Naive thymus-derived CD4-positive, alpha-beta T cell (primary cell): ENCODE measurements at regions of chr19 and their contacts with region 1.

Region 1: DNA sequence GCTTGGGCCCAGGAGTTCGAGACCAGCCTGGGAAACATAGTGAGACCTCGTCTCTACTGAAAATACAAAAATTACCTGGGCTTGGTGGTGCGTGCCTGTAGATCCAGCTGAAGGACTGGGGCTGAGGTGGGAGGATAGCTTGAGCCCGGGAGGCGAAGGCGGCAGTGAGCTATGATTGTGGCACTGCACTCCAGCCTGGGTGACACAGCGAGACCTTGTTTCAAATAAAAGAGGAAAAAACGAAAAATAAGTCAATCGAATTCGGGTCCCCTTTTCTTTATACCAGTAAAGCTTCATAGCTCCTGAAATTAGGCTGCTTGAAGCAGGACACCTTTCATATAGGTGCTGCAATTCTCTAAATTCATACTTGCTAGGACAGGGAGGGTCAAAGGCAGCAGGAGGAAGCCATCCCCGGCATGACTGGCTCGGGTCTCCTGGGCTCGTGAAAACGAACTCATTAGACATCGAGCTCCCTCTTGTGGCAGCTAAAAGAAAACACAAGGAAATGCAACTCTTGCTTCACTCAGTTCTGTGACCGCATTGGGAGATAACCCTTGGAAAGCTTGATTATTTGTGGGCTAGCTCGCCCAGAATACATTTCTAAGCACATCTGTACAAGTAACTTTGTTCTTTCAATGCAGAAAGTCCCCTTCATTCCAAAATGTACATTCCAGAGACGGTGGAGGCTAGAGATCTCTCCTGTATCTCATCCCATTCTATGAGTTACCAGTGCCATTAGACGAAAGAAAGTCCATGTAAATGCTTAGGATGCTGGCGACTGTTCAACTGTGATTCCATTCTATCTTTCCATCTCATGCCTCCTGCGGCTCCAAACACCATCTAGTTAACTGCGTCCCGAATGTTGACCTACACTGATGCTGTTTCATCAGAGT is 16.8 kb downstream of the FPR2 start:
- DNase-seq: peak in 8 of 9 donors; percentile 4 to 43 (median 35)
- ATAC-seq: peak; percentile 76
- H3K4me3 ChIP-seq: no peak overlapping the region
- H3K4me3 Mint-ChIP-seq: no peak overlapping the region
- H3K27ac ChIP-seq: no peak overlapping the region
- H3K27ac Mint-ChIP-seq: no peak overlapping the region
- H3K4me1 ChIP-seq: no peaks in the 10 kb centered on the region
- H3K4me1 Mint-ChIP-seq: peaks cover 0 to 7% (median 0%) of the 10 kb centered on the region in 7 donors
- H3K27me3 ChIP-seq: peaks cover 0 to 8% of the 10 kb centered on the region in 2 donors
- H3K27me3 Mint-ChIP-seq: peaks cover 13 to 71% (median 68%) of the 10 kb centered on the region in 5 donors

Region 2: DNA sequence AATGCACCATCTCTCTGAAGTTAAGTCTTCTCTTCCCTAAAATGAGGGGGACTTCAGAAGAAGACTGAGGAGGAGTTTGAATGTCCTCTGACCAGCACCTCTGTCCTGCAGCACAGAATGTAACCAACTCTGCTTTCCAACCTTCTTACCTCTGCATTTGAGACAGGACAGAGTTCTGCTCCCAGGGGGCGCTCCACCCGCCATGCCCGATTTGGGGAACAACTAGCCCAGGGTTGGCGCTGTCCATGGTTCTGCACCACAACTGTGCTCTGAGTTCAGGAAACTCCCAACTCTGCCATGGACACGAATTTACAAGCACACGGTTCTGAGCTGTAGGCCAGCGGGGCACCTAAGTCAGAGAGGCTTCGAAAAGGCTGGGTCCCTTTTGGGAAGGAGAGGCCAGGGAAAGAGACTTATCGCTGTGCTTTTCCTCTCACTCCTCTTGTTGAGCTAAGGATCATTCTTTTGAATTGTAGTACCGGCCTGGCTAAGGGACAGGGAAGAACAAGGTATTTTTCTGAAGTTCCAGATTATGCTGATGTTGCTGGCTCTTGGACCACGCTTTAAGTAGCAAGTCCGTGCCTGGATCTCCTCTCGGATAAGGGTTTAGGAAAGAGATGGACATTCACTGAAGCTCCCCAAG is 169.8 kb before region 1 on chr19:
- CTCF ChIA-PET with region 1: no interaction called
- POLR2A ChIA-PET with region 1: no interaction called
- intact Hi-C with region 1: loop called in 1 of 2 experiments (anchors 2 kb)
- DNase-seq: peak in 8 of 9 donors; percentile 19 to 75 (median 36)
- ATAC-seq: peak; percentile 88
- H3K4me3 ChIP-seq: no peak overlapping the region
- H3K4me3 Mint-ChIP-seq: no peak overlapping the region
- H3K27ac ChIP-seq: no peak overlapping the region
- H3K27ac Mint-ChIP-seq: no peak overlapping the region
- H3K4me1 ChIP-seq: no peaks in the 10 kb centered on the region
- H3K4me1 Mint-ChIP-seq: peaks cover 0 to 5% (median 0%) of the 10 kb centered on the region in 7 donors
- H3K27me3 ChIP-seq: no peaks in the 10 kb centered on the region
- H3K27me3 Mint-ChIP-seq: peaks cover 6 to 60% (median 52%) of the 10 kb centered on the region in 5 donors

Region 3: DNA sequence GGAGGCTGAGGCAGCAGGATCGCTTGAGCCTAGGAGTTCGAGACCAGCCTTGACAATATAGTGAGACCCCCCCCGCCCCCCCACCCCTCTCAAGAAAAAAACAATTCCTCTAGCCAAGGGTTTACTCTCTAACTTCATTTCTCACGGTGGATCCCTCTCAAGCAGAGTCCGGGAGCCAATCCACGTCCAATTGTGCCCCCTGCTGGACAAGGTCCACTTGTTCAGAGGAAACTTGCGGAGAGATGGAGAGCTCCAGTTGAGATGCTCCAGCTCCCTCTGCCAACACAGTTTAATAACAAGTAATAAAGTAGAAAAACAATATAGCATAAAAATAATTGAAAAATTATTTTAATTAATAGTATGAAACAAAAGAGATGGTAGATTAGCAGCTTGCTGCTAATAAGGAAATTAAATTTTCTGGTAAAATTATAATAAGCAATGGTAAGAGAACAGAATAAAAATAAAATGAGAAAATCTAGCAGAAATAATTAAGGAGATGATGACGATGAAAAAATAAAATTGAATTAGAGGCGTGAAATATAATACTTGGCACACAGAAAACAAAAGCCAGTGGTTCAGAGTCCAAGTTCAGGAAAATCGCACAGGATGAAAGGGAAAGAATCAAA is 116.7 kb before region 1 on chr19:
- CTCF ChIA-PET with region 1: interaction called, 3 read pairs
- POLR2A ChIA-PET with region 1: no interaction called
- intact Hi-C with region 1: loop called in 1 of 2 experiments (anchors 2 kb)
- DNase-seq: peak in 8 of 9 donors; percentile 7 to 52 (median 29)
- ATAC-seq: peak; percentile 60
- H3K4me3 ChIP-seq: no peak overlapping the region
- H3K4me3 Mint-ChIP-seq: no peak overlapping the region
- H3K27ac ChIP-seq: no peak overlapping the region
- H3K27ac Mint-ChIP-seq: no peak overlapping the region
- H3K4me1 ChIP-seq: no peaks in the 10 kb centered on the region
- H3K4me1 Mint-ChIP-seq: peaks cover 4 to 8% (median 7%) of the 10 kb centered on the region in 7 donors
- H3K27me3 ChIP-seq: peaks cover 0 to 6% of the 10 kb centered on the region in 2 donors
- H3K27me3 Mint-ChIP-seq: peaks cover 17 to 34% (median 28%) of the 10 kb centered on the region in 5 donors